Activated T-helper 1 cell treated with anti-CD3 and anti-CD28 coated beads, Interleukin-12 subunit alpha, Interleukin-12 subunit beta, Interleukin-2, Interleukin-4 antibody, amounts not matched to agents 30 ng/mL and 10 ng/mL and 1 ng/mL, durations not matched to agents 14 hours and 24 hours and 36 hours (primary cell): ENCODE measurements at regions of chr10 and their contacts with region 1.

Region 1: DNA sequence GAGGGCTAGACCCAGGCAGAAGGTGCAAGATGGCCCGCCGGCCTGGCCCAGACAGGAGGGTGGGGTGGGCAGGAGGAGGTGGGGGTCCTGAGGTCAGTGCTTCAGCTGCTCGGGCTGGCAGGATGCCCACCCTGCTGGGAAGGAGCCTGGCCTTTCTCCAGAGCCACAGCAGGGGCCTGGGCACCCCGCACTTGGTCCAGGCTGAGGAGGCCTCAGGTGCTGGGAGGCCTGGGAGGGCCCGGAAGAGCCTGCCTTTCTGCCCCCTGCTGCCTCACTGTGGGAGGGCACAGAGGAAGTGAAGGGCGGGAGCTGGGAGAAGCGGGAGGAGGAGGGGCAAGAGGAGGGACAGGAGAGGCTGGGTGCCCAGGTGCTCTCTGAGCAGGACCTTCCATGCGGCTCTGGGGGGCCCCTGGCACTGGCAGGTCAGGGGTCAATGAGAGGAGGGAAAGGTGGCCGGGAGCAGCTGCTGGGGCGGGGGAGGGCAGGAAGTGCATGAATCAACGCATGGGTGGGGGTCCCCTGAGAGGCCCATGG is 49.7 kb downstream of the PWWP2B start:
- DNase-seq: peak; percentile 63
- H3K4me3 Mint-ChIP-seq: peak overlapping the region; percentile 70
- H3K27ac Mint-ChIP-seq: peak overlapping the region; percentile 98
- H3K4me1 Mint-ChIP-seq: peaks cover 30% of the 10 kb centered on the region
- H3K27me3 Mint-ChIP-seq: peaks cover 1% of the 10 kb centered on the region

Region 2: GRCh38 chr10:132185601-132186487 is 260.9 kb before region 1 on chr10:
- intact Hi-C with region 1: loop called (anchors 10 kb)
- DNase-seq: peak; percentile 68
- H3K4me3 Mint-ChIP-seq: peak overlapping the region; percentile 71
- H3K27ac Mint-ChIP-seq: no peak overlapping the region
- H3K4me1 Mint-ChIP-seq: no peaks in the 10 kb centered on the region
- H3K27me3 Mint-ChIP-seq: peaks cover 31% of the 10 kb centered on the region

Region 3: DNA sequence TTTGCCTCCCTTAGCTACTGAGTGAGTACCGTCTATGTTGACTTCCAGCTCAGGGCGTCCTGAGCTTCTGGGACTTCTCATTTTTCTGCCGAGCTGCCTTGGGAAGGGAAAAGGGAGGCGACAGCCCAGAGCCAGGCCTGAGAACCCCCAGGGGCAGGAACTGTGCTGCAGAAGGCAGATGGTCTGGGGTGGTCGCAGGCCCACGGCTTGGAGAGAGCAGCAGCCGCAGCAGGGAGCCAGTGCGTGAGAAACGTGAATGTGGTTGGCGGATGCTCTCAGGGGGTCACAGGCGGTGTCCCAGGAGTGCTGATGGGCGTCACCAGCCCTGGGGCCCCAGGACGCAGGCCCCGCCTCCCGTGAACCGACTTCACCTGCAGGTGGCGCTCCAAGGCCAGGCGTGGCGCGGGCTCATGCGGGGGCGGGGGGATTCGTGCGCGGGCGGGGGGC is 58.9 kb before region 1 on chr10:
- intact Hi-C with region 1: loop called (anchors 1 kb)
- DNase-seq: peak; percentile 63
- H3K4me3 Mint-ChIP-seq: peak overlapping the region; percentile 47
- H3K27ac Mint-ChIP-seq: peak overlapping the region; percentile 92
- H3K4me1 Mint-ChIP-seq: peaks cover 1% of the 10 kb centered on the region
- H3K27me3 Mint-ChIP-seq: peaks cover 7% of the 10 kb centered on the region

Region 4: DNA sequence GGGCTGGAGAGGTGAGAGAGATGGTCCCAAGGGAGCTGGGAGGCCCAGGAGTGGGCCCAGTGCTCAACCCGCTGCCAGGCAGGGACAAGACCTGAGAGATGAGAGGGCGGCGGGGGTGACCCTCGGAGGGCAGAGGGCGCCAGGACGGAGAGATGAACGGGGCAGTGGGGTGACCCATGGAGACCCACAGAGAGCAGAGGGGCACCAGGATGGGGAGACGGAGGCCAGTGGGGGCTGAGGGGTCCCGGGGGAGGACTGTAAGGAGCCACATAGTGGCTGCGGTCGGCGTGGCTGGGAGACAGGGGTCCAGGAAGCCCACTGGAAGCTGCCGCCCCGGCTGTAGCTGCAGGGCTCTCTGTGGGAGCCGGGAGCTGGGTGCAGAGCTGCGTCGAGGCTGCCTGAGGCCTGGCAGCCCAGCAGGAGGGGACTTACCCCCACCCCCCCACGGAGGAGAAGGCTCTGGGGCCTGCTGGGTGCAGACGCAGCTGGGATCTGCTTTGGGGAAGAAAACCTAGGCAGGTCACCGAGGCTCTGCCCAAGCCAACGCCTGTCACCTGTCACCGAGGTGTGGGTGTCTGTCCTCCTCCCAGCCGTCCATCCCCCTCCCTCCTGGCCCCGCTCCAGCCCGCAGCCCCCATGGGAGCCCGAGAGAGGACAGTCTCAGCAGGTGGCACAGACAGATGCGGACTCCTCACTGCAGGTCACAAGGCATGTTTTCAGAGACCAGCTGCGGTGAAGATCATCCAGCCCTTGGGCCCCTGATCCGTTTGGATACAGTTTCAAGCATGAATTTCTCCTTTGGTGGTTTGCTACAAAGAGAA is 24.6 kb before region 1 on chr10:
- intact Hi-C with region 1: loop called (anchors 2 kb)
- DNase-seq: no peak
- H3K4me3 Mint-ChIP-seq: no peak overlapping the region
- H3K27ac Mint-ChIP-seq: no peak overlapping the region
- H3K4me1 Mint-ChIP-seq: peaks cover 5% of the 10 kb centered on the region
- H3K27me3 Mint-ChIP-seq: no peaks in the 10 kb centered on the region